Activated CD4-positive, alpha-beta T cell treated with anti-CD3 and anti-CD28 coated beads, Interleukin-2, amount 10 ng/mL, durations not matched to agents 7 days and 5 days (primary cell): ENCODE measurements at regions of chr6 and their contacts with region 1.

Region 1: DNA sequence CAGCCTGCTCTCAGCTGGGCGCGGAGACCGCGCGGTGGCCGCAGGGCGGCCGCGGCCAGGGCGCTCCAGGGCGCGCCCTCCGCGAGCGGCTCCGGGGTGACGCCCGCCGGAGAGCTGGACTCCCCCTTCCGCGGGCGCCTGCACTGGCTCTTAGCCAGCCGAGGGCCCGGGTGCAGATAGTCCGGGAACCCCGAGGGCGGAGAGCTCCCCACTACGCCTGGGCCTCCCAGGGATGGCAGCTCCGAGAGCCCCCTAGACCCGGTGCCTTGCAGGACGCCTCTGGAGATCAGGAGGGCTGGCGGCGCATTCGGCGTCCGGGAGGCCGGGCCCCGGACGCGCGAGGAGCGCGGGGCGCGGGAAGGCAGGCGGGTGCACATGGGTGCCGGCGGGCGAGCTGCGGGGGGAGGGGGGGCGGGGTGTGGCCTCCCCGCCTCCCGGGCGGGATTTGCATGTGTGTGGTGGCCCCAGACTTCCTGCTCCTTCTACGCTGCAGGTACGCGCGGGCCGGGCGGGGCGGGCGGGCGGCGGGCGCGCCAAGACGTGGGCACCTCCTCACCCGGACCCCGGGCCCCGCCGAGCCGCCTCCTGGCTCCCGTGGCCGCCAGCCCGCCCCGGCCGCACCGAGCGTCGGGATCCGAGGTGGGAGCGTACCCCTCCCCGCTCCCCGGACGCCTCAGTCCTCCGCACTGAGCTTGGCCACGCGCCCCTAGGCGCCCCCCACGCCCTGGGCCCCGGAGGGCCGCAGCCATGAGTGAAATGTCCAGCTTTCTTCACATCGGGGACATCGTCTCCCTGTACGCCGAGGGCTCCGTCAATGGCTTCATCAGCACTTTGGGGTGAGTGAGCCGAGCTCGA is at the start of gene ITPR3:
- DNase-seq: peak; percentile 81
- H3K4me3 Mint-ChIP-seq: peak within 1 kb of the TSS; percentile 93
- H3K27ac Mint-ChIP-seq: peak within 1 kb of the TSS; percentile 95
- H3K4me1 Mint-ChIP-seq: peaks cover 55% of the 10 kb centered on the region
- H3K27me3 Mint-ChIP-seq: no peaks in the 10 kb centered on the region
- total RNA-seq, gene ITPR3: 64.2 to 65.8 TPM

Region 2: GRCh38 chr6:33585403-33586107 is 35.5 kb before region 1 on chr6:
- CTCF ChIA-PET with region 1: interaction called, 16 read pairs
- POLR2A ChIA-PET with region 1: no interaction called
- DNase-seq: peak; percentile 89
- H3K4me3 Mint-ChIP-seq: peak overlapping the region; percentile 71
- H3K27ac Mint-ChIP-seq: peak overlapping the region; percentile 97
- H3K4me1 Mint-ChIP-seq: peaks cover 33% of the 10 kb centered on the region
- H3K27me3 Mint-ChIP-seq: no peaks in the 10 kb centered on the region

Region 3: DNA sequence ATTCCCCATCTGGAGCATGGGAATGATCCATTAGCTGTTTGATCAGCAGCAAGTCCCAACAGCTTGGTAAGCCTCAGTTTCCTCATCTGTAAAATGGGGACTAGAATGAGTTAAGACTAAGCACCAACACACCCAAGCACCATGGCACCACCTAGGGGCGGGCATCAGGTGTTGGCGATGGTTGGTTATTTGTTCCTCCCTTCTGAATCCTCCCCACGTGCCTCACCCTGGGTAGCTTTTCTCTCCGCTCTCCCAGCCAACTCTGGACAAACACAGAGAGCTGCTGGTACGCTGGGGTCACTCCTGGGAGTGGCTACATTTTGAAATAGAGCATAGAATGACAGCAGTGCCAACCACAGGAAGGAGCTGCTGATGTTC is 13.3 kb before region 1 on chr6:
- CTCF ChIA-PET with region 1: interaction called, 18 read pairs
- POLR2A ChIA-PET with region 1: no interaction called
- DNase-seq: peak; percentile 68
- H3K4me3 Mint-ChIP-seq: no peak overlapping the region
- H3K27ac Mint-ChIP-seq: no peak overlapping the region
- H3K4me1 Mint-ChIP-seq: no peaks in the 10 kb centered on the region
- H3K27me3 Mint-ChIP-seq: peaks cover 11% of the 10 kb centered on the region

Region 4: DNA sequence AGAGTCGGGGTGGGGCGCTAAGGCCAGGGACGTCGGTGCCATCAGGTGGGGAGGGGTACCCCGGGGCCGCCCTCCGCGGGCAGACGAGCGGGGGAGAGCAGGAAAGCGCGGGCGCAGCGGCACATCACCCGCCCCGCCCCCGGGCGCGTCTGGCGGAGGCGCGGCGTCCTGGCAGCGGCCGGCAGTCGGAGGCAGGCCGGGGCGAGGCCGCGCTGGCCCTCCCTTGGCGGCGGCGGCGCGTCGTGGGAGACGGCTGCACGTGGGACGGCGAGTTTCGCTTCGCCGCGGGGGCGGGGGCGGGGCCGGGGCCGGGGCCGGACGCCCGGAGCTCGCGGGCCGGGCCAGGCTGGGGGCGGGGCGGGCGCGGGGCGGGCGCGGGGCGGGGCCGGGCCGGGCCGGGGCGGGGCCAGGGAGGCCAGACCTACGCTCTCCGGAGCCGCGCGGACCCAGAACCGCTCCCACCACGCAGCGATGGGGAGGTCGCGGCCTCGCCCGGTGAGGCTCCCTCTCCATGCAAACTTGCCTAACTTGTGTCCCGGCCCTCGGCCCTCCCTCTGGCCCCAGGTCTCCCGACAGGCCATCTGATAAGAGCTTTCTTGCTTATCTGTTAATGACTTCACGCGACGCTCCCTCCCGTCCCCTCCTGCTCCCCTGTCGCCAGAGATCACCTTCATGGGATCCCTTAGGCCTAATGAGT is 12.5 kb after region 1 on chr6:
- CTCF ChIA-PET with region 1: interaction called, 11 read pairs
- POLR2A ChIA-PET with region 1: no interaction called
- DNase-seq: peak; percentile 53
- H3K4me3 Mint-ChIP-seq: peak overlapping the region; percentile 71
- H3K27ac Mint-ChIP-seq: peak overlapping the region; percentile 66
- H3K4me1 Mint-ChIP-seq: peaks cover 76% of the 10 kb centered on the region
- H3K27me3 Mint-ChIP-seq: no peaks in the 10 kb centered on the region